Activated naive CD4-positive, alpha-beta T cell treated with anti-CD3 and anti-CD28 coated beads for 36 hours (primary cell): ENCODE measurements at regions of chr6 and their contacts with region 1.

Region 1: GRCh38 chr6:148830614-148831013 is 83.8 kb downstream of the UST start:
- DNase-seq: no peak
- H3K4me3 Mint-ChIP-seq: no peak overlapping the region
- H3K27ac Mint-ChIP-seq: no peak overlapping the region
- H3K4me1 Mint-ChIP-seq: peaks cover 17% of the 10 kb centered on the region
- H3K27me3 Mint-ChIP-seq: peaks cover 20% of the 10 kb centered on the region

Region 2: GRCh38 chr6:148464319-148465010 is 366.1 kb before region 1 on chr6:
- CTCF ChIA-PET with region 1: no interaction called
- intact Hi-C with region 1: no loop called
- DNase-seq: peak; percentile 72
- H3K4me3 Mint-ChIP-seq: no peak overlapping the region
- H3K27ac Mint-ChIP-seq: no peak overlapping the region
- H3K4me1 Mint-ChIP-seq: no peaks in the 10 kb centered on the region
- H3K27me3 Mint-ChIP-seq: peaks cover 13% of the 10 kb centered on the region

Region 3: DNA sequence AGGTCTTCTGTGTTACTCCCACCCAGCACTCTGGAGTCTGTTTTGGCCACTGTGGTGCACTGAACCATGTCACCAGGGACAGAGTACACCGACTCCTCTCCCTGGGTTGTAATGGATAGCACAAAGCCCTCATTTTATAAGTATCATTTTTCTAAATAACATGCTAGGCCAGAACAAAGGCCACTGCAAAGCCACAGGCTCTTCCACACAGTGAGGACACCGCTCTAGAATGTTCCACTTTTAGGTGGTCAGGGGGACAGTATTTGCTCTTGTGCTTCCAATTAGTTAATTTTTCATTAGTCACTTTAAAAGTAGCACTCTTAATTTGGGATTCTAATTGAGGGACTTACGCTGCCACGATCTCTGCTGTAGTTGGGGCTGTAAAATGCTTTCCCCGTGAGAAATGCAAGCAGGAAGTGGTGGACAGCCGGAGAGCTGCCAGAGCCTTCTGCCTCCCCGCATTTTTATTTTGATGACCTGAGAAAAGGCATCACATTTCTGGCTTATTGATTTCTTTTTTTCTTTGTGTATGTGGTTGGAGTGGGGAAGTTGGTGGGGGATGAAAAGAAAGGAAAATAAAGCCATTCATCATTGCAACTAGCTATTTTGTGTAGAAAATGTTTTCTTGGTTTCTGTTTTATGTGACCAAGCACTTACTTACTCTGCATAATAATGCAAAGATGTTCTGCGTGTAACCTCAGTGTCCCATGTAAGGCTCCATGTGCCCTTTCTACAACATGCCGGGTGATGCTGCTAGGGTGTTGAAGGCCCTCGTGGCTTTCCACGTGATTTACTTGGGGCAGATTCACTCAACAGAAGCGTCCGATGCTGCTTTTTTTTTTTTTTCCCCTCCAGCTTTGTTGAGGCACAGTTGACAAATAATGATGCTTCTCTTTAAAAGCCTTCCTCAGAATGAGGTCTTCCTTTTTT is 292.1 kb before region 1 on chr6:
- CTCF ChIA-PET with region 1: no interaction called
- intact Hi-C with region 1: no loop called
- DNase-seq: no peak
- H3K4me3 Mint-ChIP-seq: no peak overlapping the region
- H3K27ac Mint-ChIP-seq: no peak overlapping the region
- H3K4me1 Mint-ChIP-seq: no peaks in the 10 kb centered on the region
- H3K27me3 Mint-ChIP-seq: no peaks in the 10 kb centered on the region

Region 4: DNA sequence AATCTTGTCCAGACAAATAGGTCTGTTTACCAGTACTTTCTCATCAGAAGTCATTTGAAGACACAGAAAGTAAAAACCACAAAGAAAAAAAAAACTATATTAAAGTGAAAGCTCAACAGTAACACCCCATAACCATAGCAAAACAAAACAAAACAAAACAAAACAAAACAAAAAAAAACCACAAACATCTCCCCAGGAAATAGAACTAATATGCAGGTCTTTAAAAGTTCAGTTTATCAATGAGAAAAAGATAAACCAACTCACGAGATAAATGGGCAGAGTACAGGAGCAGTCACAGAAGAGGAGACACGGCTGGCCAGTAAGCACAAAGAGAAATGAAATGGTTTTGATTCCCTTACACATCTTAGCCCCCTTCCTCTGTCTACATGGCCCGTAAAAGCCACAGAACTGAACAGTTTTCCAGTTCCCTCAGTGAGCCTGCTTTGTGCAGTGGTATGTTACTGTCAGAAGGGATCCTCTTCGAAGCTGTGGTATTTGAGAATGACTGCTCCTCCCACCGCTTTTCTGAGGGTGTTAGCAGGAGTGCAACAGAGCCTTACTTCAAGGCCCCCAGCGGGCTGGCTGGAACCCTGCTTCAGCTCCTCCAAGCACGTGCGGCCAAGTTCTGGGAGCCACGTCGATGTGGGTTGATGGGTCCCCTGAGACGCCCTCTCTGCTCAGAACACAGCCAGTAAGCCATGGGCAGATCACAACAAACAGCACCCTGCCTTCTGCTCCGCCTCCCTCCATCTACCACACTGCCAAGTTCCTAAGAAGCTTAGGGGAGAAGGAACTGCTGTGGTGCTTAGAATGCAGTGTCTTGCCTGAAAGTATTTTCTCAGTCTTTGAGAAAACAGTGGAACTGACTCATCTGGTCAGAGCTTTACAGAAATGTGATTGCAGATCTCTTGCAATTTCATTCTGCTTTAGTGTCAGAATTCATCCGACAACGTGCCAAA is 69.8 kb before region 1 on chr6:
- CTCF ChIA-PET with region 1: no interaction called
- intact Hi-C with region 1: loop called (anchors 1 kb)
- DNase-seq: peak; percentile 41
- H3K4me3 Mint-ChIP-seq: peak overlapping the region; percentile 30
- H3K27ac Mint-ChIP-seq: peak overlapping the region; percentile 65
- H3K4me1 Mint-ChIP-seq: peaks cover 37% of the 10 kb centered on the region
- H3K27me3 Mint-ChIP-seq: peaks cover 37% of the 10 kb centered on the region

Region 5: GRCh38 chr6:148868314-148868713 is 37.7 kb after region 1 on chr6:
- CTCF ChIA-PET with region 1: no interaction called
- intact Hi-C with region 1: loop called (anchors 1 kb)
- DNase-seq: no peak
- H3K4me3 Mint-ChIP-seq: no peak overlapping the region
- H3K27ac Mint-ChIP-seq: peak overlapping the region; percentile 33
- H3K4me1 Mint-ChIP-seq: peaks cover 10% of the 10 kb centered on the region
- H3K27me3 Mint-ChIP-seq: peaks cover 2% of the 10 kb centered on the region